Panc1 (cell line): ENCODE measurements at regions of chr13 and their contacts with region 1.

Region 1: DNA sequence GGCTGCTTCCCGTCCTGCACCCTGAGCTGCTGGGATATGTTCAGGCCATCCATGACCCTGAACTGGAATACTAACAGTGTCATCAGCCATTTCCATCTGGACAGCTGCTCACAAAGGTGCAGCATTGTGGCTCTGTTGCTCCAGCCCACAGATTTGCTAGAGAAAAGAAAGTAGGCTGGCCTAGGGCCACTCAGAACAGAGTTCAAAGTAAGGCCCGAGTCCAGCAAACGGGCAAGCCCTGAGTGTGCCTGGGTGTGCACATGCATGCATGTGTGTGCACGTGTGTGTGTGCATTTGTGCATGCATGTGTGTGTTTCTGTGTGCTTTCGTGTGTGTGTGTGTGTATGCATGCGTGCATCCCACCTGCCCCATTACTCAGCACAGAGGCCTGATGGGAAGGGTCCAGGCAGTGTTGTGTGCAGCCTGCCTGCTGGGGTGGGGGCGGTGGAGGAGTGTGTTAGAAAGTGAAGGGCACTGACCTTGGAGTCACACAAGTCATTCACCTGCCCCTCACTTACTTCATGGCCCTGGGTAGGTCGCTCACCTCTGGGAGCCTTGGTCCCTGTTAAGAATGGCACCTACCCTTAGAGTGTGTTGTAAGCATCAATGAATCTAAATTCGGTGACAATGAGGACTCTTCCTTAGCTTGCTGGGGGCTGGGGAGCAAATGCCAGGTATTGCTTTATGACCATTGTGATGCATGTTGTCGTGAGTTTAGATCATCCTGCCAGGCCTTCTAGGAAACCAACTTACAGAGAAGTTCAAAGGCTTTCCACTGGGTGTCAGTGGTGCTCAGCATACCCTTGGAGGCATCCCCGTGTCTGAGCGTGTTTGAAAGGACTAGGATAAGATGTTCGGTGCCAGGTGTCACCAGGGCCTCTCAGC is 53.2 kb downstream of the GPR12 start:
- DNase-seq: no peak
- ATAC-seq: peak; percentile 94
- H3K4me3 ChIP-seq: no peak overlapping the region
- H3K27ac ChIP-seq: no peak overlapping the region
- H3K4me1 ChIP-seq: no peaks in the 10 kb centered on the region
- H3K27me3 ChIP-seq: no peaks in the 10 kb centered on the region
- CTCF ChIP-seq: peak; percentile 76

Region 2: GRCh38 chr13:25771196-25771595 is 936.2 kb before region 1 on chr13:
- CTCF ChIA-PET with region 1: no interaction called
- POLR2A ChIA-PET with region 1: no interaction called
- in situ Hi-C with region 1: no loop called
- intact Hi-C with region 1: no loop called
- DNase-seq: no peak
- ATAC-seq: no peak
- H3K4me3 ChIP-seq: no peak overlapping the region
- H3K27ac ChIP-seq: no peak overlapping the region
- H3K4me1 ChIP-seq: no peaks in the 10 kb centered on the region
- H3K27me3 ChIP-seq: no peaks in the 10 kb centered on the region
- CTCF ChIP-seq: no peak

Region 3: GRCh38 chr13:26929971-26930730 is 222.8 kb after region 1 on chr13:
- CTCF ChIA-PET with region 1: no interaction called
- POLR2A ChIA-PET with region 1: no interaction called
- in situ Hi-C with region 1: no loop called
- intact Hi-C with region 1: loop called (anchors 2 kb)
- DNase-seq: peak; percentile 28
- ATAC-seq: peak; percentile 91
- H3K4me3 ChIP-seq: peak overlapping the region in 1 of 2 experiments; percentile 34; a peak in 2 of 4 replicates
- H3K27ac ChIP-seq: no peak overlapping the region
- H3K4me1 ChIP-seq: no peaks in the 10 kb centered on the region
- H3K27me3 ChIP-seq: no peaks in the 10 kb centered on the region
- CTCF ChIP-seq: peak; percentile 91